A549 (cell line): ENCODE measurements at regions of chr2 and their contacts with region 1.

Region 1: GRCh38 chr2:66574701-66575624 is 140.0 kb downstream of the MEIS1 start:
- DNase-seq: peak; percentile 69 to 79
- ATAC-seq: peak; percentile 62 to 71
- H3K4me3 ChIP-seq: peak overlapping the region; percentile 52
- H3K27ac ChIP-seq: peak overlapping the region; percentile 0 to 48; a peak in 2 of 6 replicates
- H3K4me1 ChIP-seq: peaks cover 28% of the 10 kb centered on the region
- CTCF ChIP-seq: peak; percentile 83
- EP300 ChIP-seq: no peak
- POLR2A ChIP-seq: no peak
- RAD21 ChIP-seq: peak; percentile 89 to 93

Region 2: GRCh38 chr2:66423391-66424124 is 151.4 kb before region 1 on chr2:
- CTCF ChIA-PET with region 1: interaction called, 86 read pairs
- POLR2A ChIA-PET with region 1: no interaction called
- DNase-seq: no peak
- ATAC-seq: no peak
- H3K4me3 ChIP-seq: no peak overlapping the region
- H3K27ac ChIP-seq: no peak overlapping the region
- H3K4me1 ChIP-seq: peaks cover 21% of the 10 kb centered on the region; the same call in 2 of the 3 replicates
- CTCF ChIP-seq: no peak
- EP300 ChIP-seq: no peak
- POLR2A ChIP-seq: no peak
- RAD21 ChIP-seq: no peak

Region 3: GRCh38 chr2:66429071-66429477 is 145.9 kb before region 1 on chr2:
- CTCF ChIA-PET with region 1: interaction called, 86 read pairs
- POLR2A ChIA-PET with region 1: interaction called, 24 read pairs
- DNase-seq: peak; percentile 27 to 69
- ATAC-seq: no peak
- H3K4me3 ChIP-seq: no peak overlapping the region
- H3K27ac ChIP-seq: no peak overlapping the region
- H3K4me1 ChIP-seq: peaks cover 21% of the 10 kb centered on the region; the same call in 2 of the 3 replicates
- CTCF ChIP-seq: peak; percentile 96
- EP300 ChIP-seq: no peak
- POLR2A ChIP-seq: no peak
- RAD21 ChIP-seq: peak; percentile 94 to 95

Region 4: DNA sequence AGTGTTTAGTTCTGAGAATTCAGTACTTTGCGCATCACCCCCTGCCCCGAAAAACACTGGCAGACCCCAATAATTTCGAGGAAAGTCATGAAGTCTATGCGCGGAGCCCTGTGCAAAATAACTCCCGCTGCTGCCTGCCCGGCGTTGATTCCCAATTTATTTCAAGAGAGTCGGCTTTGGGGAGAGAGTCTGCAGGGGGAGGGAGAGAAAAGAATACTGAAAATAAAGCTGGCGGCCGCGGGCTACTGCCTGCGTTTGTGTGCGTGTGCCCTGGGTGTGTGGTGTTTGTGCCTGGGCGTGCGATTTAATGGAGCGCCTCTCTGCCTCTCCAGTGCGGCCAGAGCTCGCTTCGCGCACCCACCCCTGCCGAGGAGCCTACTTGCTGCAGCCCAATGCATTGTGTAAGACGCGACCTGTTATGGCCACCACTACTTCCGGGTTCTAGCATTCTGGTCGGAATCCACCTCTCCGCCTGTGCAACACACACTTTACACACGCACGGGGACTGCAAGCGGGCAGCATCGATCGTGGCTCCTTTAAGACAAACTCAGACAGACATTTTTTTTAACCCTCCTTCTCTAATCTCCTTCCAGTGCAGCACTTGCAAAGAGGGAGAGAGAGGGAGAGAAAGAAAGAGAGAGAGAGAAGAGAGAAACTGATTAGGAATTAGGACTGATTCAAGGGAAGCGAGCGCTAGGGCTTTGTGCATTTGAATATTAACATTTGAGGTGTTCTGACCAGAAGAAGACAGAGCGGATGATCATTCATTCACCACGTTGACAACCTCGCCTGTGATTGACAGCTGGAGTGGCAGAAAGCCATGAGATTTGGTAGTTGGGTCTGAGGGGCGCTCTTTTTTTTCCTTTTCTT is 140.0 kb before region 1 on chr2 and contains the start of gene MEIS1:
- CTCF ChIA-PET with region 1: interaction called, 86 read pairs
- POLR2A ChIA-PET with region 1: interaction called, 24 read pairs
- DNase-seq: peak; percentile 93 to 95
- ATAC-seq: peak; percentile 87 to 90
- H3K4me3 ChIP-seq: peak within 1 kb of the TSS; percentile 77
- H3K27ac ChIP-seq: peak within 1 kb of the TSS; percentile 70 to 86
- H3K4me1 ChIP-seq: peaks cover 7% of the 10 kb centered on the region; the same call in 1 of the 3 replicates
- CTCF ChIP-seq: no peak
- EP300 ChIP-seq: no peak
- POLR2A ChIP-seq: peak; percentile 91
- RAD21 ChIP-seq: no peak
- polyA plus RNA-seq, gene MEIS1: 2.9 and 4.2 TPM in 2 replicates

Region 5: DNA sequence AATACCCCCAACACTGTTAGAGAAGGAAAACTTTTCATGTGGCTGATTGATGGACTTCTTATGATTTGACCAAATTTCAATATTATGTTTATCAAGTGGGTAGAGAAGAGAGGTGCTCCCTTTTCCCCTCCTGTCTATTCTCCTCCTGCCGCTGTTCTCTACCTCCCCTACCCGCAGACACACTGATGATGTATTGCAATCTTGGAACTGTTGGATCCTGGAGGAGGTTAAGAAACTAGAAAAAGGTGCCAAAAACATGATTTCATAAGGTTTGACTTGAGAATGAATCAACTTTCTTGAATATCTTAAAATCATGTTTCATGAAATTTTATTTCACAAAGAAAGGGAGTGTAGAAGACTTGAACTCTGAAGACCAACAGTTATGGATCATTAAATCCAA is 14.3 kb before region 1 on chr2:
- CTCF ChIA-PET with region 1: interaction called, 12 read pairs
- POLR2A ChIA-PET with region 1: no interaction called
- DNase-seq: no peak
- ATAC-seq: no peak
- H3K4me3 ChIP-seq: no peak overlapping the region
- H3K27ac ChIP-seq: no peak overlapping the region
- H3K4me1 ChIP-seq: peaks cover 20% of the 10 kb centered on the region
- CTCF ChIP-seq: no peak
- EP300 ChIP-seq: no peak
- POLR2A ChIP-seq: no peak
- RAD21 ChIP-seq: no peak

Region 6: DNA sequence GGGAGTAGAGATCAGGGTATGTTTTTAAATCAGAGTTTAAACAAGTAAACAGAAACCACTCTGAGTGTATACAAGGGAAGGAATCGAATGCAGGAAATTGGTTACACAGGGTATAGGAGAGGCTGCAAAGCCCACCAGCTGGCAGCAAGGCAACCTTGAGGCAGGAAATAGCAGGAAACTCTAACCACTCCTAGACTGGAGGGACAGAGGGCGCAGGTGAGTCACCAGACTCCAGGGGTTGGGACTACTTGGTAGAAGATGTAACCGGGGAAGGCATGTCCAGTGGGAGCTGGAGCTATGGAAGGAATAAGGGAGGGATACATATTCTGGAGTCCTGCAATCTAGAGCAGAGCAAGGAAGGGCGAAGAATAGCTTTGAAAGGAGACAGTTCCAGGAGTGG is 12.3 kb after region 1 on chr2:
- CTCF ChIA-PET with region 1: interaction called, 11 read pairs
- POLR2A ChIA-PET with region 1: no interaction called
- DNase-seq: peak; percentile 16 to 54
- ATAC-seq: peak; percentile 72 to 87
- H3K4me3 ChIP-seq: no peak overlapping the region
- H3K27ac ChIP-seq: no peak overlapping the region
- H3K4me1 ChIP-seq: no peaks in the 10 kb centered on the region
- CTCF ChIP-seq: peak; percentile 43
- EP300 ChIP-seq: no peak
- POLR2A ChIP-seq: no peak
- RAD21 ChIP-seq: peak; percentile 34 to 51; a peak in 4 of 5 replicates

Region 7: GRCh38 chr2:66601624-66602023 is 26.7 kb after region 1 on chr2:
- CTCF ChIA-PET with region 1: no interaction called
- POLR2A ChIA-PET with region 1: no interaction called
- DNase-seq: no peak
- ATAC-seq: no peak
- H3K4me3 ChIP-seq: no peak overlapping the region
- H3K27ac ChIP-seq: no peak overlapping the region
- H3K4me1 ChIP-seq: no peaks in the 10 kb centered on the region
- CTCF ChIP-seq: no peak
- EP300 ChIP-seq: no peak
- POLR2A ChIP-seq: no peak
- RAD21 ChIP-seq: no peak